Heart right ventricle (tissue), 16 donors: ENCODE measurements at regions of chr2 and their contacts with region 1.

Region 1: DNA sequence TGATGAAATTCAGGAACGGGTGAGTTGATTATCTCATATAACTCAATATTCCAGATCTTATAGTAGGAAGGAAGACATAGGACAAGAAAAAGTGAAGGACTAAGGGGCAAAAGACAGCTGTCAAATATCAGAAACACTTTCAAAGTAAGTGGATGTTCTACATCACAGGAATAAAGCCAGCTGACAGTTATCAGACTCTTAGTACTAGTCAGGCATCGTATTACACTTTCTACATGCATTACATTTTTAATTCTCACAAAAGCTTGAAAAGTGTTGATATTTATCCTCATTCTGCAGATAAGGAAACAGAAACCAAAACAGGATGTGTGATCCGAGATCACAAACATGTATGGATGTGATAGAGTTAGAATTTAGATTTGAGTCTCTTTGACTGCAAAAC is 63.4 kb downstream of the DNAH6 start:
- DNase-seq: no peak
- ATAC-seq: no peak
- H3K4me3 ChIP-seq: no peak overlapping the region
- H3K27ac ChIP-seq: no peak overlapping the region
- H3K4me1 ChIP-seq: peaks cover 0 to 9% (median 0%) of the 10 kb centered on the region in 9 donors
- H3K27me3 ChIP-seq: no peaks in the 10 kb centered on the region
- CTCF ChIP-seq: no peak

Region 2: GRCh38 chr2:82650038-82650437 is 1929.6 kb before region 1 on chr2:
- intact Hi-C with region 1: loop called in 1 of 10 experiments (anchors 5 kb)
- DNase-seq: no peak
- ATAC-seq: no peak
- H3K4me3 ChIP-seq: no peak overlapping the region
- H3K27ac ChIP-seq: no peak overlapping the region
- H3K4me1 ChIP-seq: no peaks in the 10 kb centered on the region
- H3K27me3 ChIP-seq: no peaks in the 10 kb centered on the region
- CTCF ChIP-seq: no peak

Region 3: GRCh38 chr2:84516234-84516986 is 63.3 kb before region 1 on chr2 and contains the start of gene DNAH6:
- intact Hi-C with region 1: no loop called
- DNase-seq: peak; percentile 87 to 94
- ATAC-seq: peak; percentile 99 to 100 (median 100)
- H3K4me3 ChIP-seq: peak within 1 kb of the TSS in 9 of 10 donors; percentile 31 to 59 (median 55)
- H3K27ac ChIP-seq: peak within 1 kb of the TSS in 2 of 10 donors; percentile 11 to 20
- H3K4me1 ChIP-seq: peaks cover 0 to 9% (median 4%) of the 10 kb centered on the region in 9 donors
- H3K27me3 ChIP-seq: peaks cover 0 to 4% (median 0%) of the 10 kb centered on the region in 7 donors
- CTCF ChIP-seq: no peak
- total RNA-seq, gene DNAH6: 0.08 to 0.49 (median 0.25) TPM in 9 of 10 donors, not detected in the other

Region 4: GRCh38 chr2:84619794-84620371 is 40.2 kb after region 1 on chr2:
- intact Hi-C with region 1: no loop called
- DNase-seq: no peak
- ATAC-seq: no peak
- H3K4me3 ChIP-seq: no peak overlapping the region
- H3K27ac ChIP-seq: no peak overlapping the region
- H3K4me1 ChIP-seq: no peaks in the 10 kb centered on the region
- H3K27me3 ChIP-seq: no peaks in the 10 kb centered on the region
- CTCF ChIP-seq: no peak